HepG2 (cell line): ENCODE measurements at regions of chr1 and their contacts with region 1.

Region 1: DNA sequence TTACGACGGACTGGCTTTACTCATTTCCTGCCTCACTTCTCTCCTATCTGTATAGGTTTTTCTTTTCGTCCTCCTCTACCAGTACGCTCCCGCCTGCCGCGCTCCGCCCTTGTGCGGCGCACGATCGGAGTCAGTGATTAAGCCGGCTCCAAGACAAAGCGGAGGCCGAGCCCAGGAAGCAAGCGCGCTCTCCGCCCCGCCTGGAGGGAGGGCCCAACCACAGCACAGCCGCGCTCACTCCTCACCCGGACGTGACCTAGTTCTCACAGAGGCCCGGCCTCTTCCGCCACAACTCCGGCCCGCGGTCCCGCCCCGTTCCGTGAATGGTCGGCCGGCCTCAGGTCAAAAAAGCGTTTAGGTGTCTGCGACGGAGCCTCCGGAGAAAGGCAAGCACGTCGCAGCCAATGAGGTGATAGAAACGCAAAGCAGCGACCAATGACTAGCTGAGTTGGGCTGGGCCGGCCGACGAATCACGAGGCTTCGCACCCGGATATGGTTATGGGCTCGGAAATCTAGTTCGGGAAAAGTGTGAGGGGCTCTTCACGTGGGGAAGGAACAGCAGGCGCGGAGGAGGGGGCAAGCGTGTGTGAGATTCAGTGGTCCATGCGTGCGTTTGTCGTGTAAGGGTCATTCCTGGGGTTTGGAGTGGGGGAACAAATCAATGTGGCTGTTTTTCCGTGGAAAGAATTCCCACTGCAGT is at the start of gene METTL13:
- DNase-seq: peak; percentile 97
- ATAC-seq: peak; percentile 99
- H3K4me3 ChIP-seq: peak within 1 kb of the TSS; percentile 82 to 83 (median 82)
- H3K27ac ChIP-seq: peak within 1 kb of the TSS; percentile 85
- H3K4me1 ChIP-seq: peaks cover 35% of the 10 kb centered on the region
- H3K27me3 ChIP-seq: no peaks in the 10 kb centered on the region; a peak in 1 of 5 replicates
- CTCF ChIP-seq: peak; percentile 24; the same call in 1 of the 2 replicates
- EP300 ChIP-seq: no peak
- POLR2A ChIP-seq: peak; percentile 67 to 73
- RAD21 ChIP-seq: no peak
- total RNA-seq, gene METTL13: 22.8 and 28.3 TPM in 2 replicates

Region 2: GRCh38 chr1:171741872-171742576 is 39.3 kb before region 1 on chr1 and contains the start of gene VAMP4:
- CTCF ChIA-PET with region 1: no interaction called
- POLR2A ChIA-PET with region 1: interaction called, 20 read pairs
- in situ Hi-C with region 1: no loop called
- intact Hi-C with region 1: loop called (anchors 1 kb)
- DNase-seq: peak; percentile 54
- ATAC-seq: peak; percentile 92
- H3K4me3 ChIP-seq: peak within 1 kb of the TSS; percentile 78 to 88 (median 86)
- H3K27ac ChIP-seq: peak within 1 kb of the TSS; percentile 72
- H3K4me1 ChIP-seq: peaks cover 23% of the 10 kb centered on the region
- H3K27me3 ChIP-seq: no peaks in the 10 kb centered on the region
- CTCF ChIP-seq: no peak
- EP300 ChIP-seq: peak in 1 of 2 experiments; percentile 28; a peak in 1 of 4 replicates
- POLR2A ChIP-seq: peak; percentile 75 to 78
- RAD21 ChIP-seq: no peak
- total RNA-seq, gene VAMP4: 1.4 and 1.6 TPM in 2 replicates